ENCODE measurements at regions of chr22 and their contacts with region 1.

Region 1: DNA sequence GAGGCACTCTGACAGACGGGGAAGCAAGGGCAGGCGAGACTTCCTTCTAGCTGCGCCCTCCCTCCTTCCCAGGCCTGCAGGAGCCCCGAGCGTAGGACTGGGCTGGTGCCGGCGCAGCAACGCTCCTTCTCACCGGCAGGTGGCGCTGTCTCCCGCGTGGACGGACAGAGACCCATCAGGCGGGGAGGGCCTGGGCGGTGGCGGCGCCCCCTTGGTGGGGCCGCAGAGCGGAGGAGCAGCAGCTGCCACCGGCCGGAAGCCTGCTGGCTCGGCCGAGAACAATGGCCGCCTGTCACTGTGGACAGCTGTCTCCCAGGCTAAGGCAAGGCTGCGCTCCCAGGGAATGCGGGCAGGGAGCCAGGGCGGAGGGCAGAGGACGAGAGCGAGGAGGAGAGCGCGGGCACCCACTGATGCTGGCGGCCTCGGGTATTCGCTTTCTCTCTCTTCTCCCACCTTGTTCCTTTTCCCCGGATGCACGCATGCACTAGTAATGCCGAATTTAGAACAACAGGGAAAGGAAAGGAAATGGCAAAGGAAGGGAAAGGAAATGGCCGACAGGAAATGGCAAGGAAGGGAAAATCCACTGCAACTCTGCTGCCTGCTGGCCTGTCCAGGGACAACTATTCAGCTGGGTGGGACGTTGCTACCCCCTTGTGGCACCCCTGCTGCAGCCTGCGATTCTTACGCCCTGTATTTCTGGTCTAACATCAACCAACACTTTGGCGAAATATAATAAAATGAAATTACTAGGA is 14.4 kb downstream of the PPM1F start:
- DNase-seq: peak; percentile 90 to 99 (median 97)

Region 2: GRCh38 chr22:21735200-21736076 is 202.8 kb before region 1 on chr22 and contains the start of gene YPEL1:
- intact Hi-C with region 1: loop called (anchors 5 kb)
- DNase-seq: peak; percentile 92 to 100 (median 98)

Region 3: DNA sequence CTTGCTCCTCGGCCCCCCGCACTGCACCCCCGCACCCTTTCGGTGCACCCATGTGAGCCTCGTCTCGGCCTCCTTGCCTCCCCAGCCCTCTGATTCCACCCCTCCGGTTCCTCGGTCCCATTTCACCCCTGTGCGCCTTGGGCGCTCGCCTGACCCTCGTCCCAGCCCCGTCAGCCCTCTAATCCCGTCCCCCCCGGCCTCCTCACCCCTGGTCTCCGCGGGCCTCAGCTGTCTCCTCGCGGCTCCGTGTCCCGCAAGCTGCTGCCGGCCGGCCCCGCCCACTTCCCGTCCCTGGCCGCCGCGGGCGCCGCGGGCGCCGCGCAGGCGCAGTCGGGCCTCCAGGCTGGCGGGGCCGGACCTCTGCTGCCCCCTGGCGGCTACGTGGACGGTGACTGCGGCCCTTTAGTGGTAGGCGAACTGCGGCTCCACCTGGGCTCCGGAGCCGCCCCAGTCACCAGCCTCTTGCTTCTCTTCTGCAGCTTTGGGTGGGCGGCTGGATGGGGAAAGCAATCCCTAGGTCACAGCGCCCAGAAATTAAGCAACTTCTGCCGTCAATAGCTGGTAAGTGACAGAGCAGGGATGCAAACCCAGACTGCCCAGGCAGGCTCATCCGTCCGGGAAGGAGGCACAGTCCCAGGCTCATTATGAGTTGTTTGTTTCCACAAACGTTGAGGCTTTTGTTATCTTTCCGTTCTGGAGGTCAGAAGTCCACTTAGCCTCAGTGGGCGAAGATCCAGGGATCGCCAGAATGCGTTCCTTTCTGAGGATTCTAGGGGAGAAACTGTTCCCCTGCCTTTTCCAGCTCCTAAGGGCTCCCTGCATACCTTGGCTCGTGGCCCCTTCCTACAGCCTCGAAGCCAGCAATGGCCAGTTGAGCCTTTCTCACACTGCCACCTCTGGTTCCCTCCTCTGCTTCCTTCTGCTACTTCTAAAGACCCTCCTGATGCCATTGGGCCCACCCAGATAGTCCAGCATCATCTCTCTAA is 14.6 kb after region 1 on chr22 and contains the start of gene PPM1F:
- intact Hi-C with region 1: loop called (anchors 2 kb)
- DNase-seq: peak; percentile 73 to 97 (median 80)

Region 4: DNA sequence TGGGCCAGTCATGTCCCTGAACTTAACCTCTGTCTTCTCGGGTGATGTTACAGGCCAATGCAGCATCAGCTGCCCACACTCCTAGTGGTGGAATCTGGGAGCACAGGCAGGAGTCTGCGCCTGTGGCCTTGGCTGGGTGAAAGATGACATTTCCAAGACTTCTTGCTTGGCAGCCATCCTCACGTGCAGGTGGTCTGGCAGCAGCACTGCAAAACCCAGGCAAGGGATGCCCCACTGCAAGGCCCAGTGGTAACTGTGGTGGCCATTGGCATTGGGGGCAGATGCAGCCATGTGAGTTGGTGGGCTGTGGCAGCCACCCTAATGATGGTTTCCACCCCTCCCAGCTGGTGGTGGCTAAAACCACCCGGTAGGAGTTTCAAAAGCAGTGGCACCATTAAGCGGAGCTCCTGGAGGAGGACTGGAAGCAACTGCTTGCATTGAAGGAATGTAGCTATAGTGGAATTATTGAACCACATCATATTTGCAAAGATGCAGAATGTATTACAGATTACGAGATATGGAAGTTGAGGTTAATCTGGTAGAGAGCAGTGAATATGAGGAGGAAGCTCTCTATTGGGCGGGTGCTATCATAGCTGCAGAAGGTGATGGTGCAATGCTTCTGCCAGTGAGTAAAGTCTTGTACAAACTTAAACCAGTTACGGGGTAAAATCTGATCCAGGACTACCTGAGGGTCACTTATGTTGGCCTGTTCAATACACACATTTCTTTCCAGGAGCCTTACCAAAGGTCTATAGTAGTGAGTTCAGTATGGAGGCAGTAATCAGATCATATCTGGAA is 165.0 kb after region 1 on chr22:
- intact Hi-C with region 1: no loop called
- DNase-seq: no peak

Region 5: DNA sequence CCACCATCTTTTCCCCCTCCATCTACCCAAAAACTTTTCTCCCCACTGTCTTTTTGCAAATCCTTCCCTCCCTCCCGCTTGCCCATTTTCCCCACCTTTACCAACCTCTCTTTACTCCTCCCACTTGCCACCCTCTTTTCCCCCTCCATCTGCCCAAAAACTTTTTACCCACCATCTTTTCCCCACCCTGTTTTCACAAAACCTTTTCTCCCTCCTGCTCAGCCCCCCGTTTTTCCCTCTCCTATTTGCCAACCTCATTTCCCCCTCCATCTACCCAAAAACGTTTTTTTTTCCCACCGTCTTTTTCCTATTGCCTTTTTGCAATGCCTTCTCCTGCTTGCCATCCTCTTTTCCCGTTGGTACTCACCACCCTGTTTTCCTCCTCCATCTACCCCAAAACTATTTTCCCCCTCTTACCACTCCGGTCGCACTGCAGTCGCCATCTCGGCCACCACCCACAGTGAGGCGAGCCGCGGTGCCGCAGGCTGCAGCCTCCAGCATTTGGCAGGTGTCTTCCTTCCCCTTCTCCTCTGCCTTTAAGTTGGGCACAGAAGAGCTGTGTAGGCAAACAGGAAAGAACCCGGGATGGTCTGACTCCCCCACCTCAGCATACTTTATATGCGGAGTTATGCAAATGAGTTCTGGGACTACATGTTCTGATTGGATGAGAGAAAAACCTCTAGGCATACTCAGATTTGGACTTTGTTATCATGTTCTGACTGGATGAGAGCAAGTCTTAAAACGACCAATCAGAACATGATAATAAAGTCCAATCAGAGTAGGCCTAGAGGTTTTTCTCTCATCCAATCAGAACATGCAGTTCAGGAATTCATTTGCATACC is 185.1 kb after region 1 on chr22:
- intact Hi-C with region 1: no loop called
- DNase-seq: no peak